Calu3 (cell line): ENCODE measurements at regions of chr16 and their contacts with region 1.

Region 1: DNA sequence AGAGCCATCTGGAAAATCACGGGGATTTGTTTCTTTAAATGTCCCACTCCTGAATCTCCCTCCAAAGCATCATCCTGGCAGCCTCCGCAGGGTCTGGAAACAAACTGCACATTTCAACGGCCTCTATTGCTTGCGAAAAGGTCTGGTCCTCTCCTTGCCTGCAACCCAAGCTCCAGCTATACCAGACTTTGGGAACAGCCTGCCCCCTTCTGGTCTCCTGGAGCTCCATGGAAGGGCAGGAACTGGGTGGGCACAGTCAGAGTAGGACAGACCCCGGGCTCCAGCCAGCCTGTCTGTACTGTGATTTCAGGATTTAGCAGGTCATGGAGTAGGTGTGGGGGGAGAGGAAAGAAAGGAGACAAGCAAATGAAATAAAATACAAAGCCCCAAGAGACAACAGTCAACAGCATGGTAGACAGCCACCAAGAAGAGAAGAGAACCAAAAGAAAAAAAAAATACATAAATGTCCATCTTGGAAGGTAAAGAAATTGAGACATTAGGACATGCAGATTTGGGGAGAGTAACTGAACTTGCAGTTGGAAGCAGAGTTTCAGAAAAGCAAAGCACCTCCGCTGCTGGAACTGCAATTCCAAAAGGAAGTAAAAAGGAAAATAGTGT is 2.7 kb downstream of the XYLT1 start:
- DNase-seq: peak; percentile 74
- H3K4me3 Mint-ChIP-seq: no peak overlapping the region
- H3K27ac Mint-ChIP-seq: no peak overlapping the region
- H3K4me1 Mint-ChIP-seq: peaks cover 20% of the 10 kb centered on the region
- H3K27me3 Mint-ChIP-seq: peaks cover 31% of the 10 kb centered on the region
- CTCF ChIP-seq: peak; percentile 69

Region 2: GRCh38 chr16:17154981-17155380 is 313.1 kb before region 1 on chr16:
- CTCF ChIA-PET with region 1: no interaction called
- intact Hi-C with region 1: loop called (anchors 5 kb)
- DNase-seq: no peak
- H3K4me3 Mint-ChIP-seq: no peak overlapping the region
- H3K27ac Mint-ChIP-seq: no peak overlapping the region
- H3K4me1 Mint-ChIP-seq: no peaks in the 10 kb centered on the region
- H3K27me3 Mint-ChIP-seq: no peaks in the 10 kb centered on the region
- CTCF ChIP-seq: no peak

Region 3: DNA sequence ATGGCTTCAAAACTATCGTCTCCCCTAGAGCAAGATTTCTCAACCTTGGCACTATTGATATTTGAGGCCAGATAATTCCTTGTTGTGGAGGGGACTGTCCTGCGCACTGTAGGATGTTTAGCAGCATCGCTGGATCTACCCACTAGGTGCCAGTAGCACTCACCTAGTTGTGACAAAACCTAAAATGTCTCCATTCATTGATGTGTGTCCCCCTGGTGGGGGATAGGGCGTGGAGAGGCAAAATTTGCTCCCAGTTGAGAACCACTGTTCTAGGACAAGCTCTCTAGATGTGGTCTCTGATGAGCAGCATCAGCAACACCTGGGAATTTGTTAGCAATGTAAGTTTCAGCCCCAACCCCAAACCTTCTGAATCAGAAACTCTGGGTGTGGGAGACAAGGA is 256.2 kb before region 1 on chr16:
- CTCF ChIA-PET with region 1: interaction called, 10 read pairs
- intact Hi-C with region 1: loop called (anchors 1 kb)
- DNase-seq: peak; percentile 58
- H3K4me3 Mint-ChIP-seq: no peak overlapping the region
- H3K27ac Mint-ChIP-seq: no peak overlapping the region
- H3K4me1 Mint-ChIP-seq: no peaks in the 10 kb centered on the region
- H3K27me3 Mint-ChIP-seq: no peaks in the 10 kb centered on the region
- CTCF ChIP-seq: peak; percentile 68

Region 4: GRCh38 chr16:17277977-17278381 is 190.1 kb before region 1 on chr16:
- CTCF ChIA-PET with region 1: interaction called, 8 read pairs
- intact Hi-C with region 1: loop called (anchors 1 kb)
- DNase-seq: peak; percentile 54
- H3K4me3 Mint-ChIP-seq: no peak overlapping the region
- H3K27ac Mint-ChIP-seq: no peak overlapping the region
- H3K4me1 Mint-ChIP-seq: peaks cover 50% of the 10 kb centered on the region
- H3K27me3 Mint-ChIP-seq: no peaks in the 10 kb centered on the region
- CTCF ChIP-seq: peak; percentile 57

Region 5: GRCh38 chr16:17369421-17370222 is 98.4 kb before region 1 on chr16:
- CTCF ChIA-PET with region 1: interaction called, 7 read pairs
- intact Hi-C with region 1: loop called (anchors 5 kb)
- DNase-seq: no peak
- H3K4me3 Mint-ChIP-seq: no peak overlapping the region
- H3K27ac Mint-ChIP-seq: no peak overlapping the region
- H3K4me1 Mint-ChIP-seq: peaks cover 22% of the 10 kb centered on the region
- H3K27me3 Mint-ChIP-seq: no peaks in the 10 kb centered on the region
- CTCF ChIP-seq: no peak

Region 6: GRCh38 chr16:17435318-17435717 is 32.7 kb before region 1 on chr16:
- CTCF ChIA-PET with region 1: no interaction called
- intact Hi-C with region 1: no loop called
- DNase-seq: no peak
- H3K4me3 Mint-ChIP-seq: no peak overlapping the region
- H3K27ac Mint-ChIP-seq: no peak overlapping the region
- H3K4me1 Mint-ChIP-seq: no peaks in the 10 kb centered on the region
- H3K27me3 Mint-ChIP-seq: no peaks in the 10 kb centered on the region
- CTCF ChIP-seq: no peak